Natural killer cell (primary cell): ENCODE measurements at regions of chr17 and their contacts with region 1.

Region 1: GRCh38 chr17:35764123-35764991 is 3.7 kb downstream of the C17orf50 start:
- DNase-seq: peak; percentile 87 to 92
- ATAC-seq: peak; percentile 86 to 92 (median 88)
- H3K4me3 ChIP-seq: peak overlapping the region; percentile 83
- H3K4me3 Mint-ChIP-seq: peak overlapping the region; percentile 95
- H3K27ac ChIP-seq: peak overlapping the region; percentile 65
- H3K27ac Mint-ChIP-seq: peak overlapping the region; percentile 66 to 88
- H3K4me1 ChIP-seq: peaks cover 15% of the 10 kb centered on the region
- H3K4me1 Mint-ChIP-seq: peaks cover 6 to 9% of the 10 kb centered on the region in 2 donors
- H3K27me3 ChIP-seq: no peaks in the 10 kb centered on the region
- H3K27me3 Mint-ChIP-seq: peaks cover 5 to 7% of the 10 kb centered on the region in 2 donors
- CTCF ChIP-seq: peak; percentile 85

Region 2: DNA sequence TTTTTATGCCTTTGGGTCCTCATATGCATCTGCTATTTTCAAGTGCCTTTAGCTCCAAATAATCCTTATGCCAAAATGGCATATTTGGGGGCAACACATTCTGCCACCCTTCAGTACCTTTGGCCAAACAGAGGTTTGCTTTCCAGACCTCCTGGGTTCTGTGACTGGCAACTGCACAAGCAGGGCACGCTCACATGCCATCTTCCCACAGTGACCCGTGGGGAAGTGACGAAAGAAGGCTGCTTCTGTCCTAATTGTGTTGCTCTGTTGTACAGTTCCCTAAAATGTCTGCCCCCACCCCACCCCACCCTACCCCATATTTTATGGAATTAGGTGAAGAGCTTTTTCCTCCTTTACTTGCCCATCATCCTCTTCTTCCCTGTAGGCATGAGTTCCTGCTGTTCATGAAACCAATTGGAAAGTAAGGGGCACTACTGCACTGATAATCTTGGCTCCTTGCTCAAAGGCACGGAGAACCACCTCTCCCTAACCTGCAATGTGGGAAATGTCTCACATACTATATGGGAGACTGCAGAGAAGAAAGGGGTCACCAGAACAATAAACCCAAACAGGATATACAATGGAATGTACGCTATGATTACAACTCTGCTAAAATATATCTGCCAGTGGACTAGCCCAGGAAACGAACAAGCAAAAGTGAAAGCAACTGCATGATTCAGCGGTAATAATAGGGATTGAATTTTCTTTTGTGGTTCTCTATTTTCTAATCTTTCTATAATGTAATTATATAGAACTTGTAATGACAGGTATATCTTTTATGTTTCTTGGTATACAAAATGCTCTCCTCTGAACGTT is 223.6 kb before region 1 on chr17:
- intact Hi-C with region 1: no loop called
- DNase-seq: peak in 1 of 2 donors; percentile 74
- ATAC-seq: peak; percentile 42 to 61 (median 54)
- H3K4me3 ChIP-seq: peak overlapping the region; percentile 39
- H3K4me3 Mint-ChIP-seq: peak overlapping the region; percentile 90
- H3K27ac ChIP-seq: peak overlapping the region; percentile 88
- H3K27ac Mint-ChIP-seq: peak overlapping the region; percentile 84 to 88
- H3K4me1 ChIP-seq: peaks cover 26% of the 10 kb centered on the region
- H3K4me1 Mint-ChIP-seq: peaks cover 46 to 53% of the 10 kb centered on the region in 2 donors
- H3K27me3 ChIP-seq: no peaks in the 10 kb centered on the region
- H3K27me3 Mint-ChIP-seq: no peaks in the 10 kb centered on the region
- CTCF ChIP-seq: no peak

Region 3: DNA sequence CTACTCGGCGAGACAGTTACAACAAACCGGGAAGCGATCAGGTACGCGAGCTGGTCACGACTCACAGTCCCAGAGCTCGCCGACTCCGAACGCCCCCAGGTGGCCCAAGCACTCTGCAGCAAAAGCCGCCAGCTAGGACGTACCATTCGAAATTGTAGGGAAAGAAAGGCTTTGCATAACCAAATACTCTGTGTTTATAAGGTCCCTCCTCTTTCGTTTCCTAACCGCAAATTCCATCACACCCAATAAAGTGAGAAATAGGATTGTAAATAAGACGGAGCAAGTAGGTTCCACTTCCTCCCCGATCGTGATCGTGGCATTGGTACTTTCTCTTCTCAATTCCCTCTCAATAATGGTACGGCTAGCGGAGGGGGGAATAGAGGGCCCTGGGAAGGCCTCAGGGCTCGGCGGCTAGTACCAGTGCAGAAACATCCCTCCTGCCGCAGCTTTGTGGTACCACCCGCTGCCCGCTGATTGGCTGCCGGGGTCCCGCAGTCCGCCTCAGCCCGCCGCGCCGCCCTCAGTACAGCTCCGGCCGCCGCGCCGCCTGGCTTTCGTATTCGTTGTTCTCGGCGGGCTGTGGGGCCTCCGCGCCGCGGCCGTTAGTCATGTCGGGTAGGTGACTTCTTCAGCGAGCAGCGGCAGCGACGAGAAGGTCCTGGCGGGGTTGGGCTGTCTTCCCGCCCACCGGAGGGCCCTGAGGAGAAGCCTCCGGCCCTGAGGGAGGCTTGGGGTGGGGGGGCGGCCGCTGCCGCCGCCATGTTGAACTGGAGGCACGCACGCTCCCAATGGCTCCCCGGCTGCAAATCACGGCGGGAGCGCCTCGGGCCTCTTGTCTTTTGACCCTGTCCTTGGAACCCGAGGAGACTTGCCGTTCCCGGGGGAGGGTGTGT is 44.9 kb after region 1 on chr17 and contains the start of gene TAF15:
- intact Hi-C with region 1: loop called (anchors 1 kb)
- DNase-seq: peak; percentile 97
- ATAC-seq: peak; percentile 90 to 98 (median 92)
- H3K4me3 ChIP-seq: peak within 1 kb of the TSS; percentile 91
- H3K4me3 Mint-ChIP-seq: peak within 1 kb of the TSS; percentile 90
- H3K27ac ChIP-seq: peak within 1 kb of the TSS; percentile 94
- H3K27ac Mint-ChIP-seq: peak within 1 kb of the TSS; percentile 98
- H3K4me1 ChIP-seq: peaks cover 18% of the 10 kb centered on the region
- H3K4me1 Mint-ChIP-seq: peaks cover 52 to 55% of the 10 kb centered on the region in 2 donors
- H3K27me3 ChIP-seq: no peaks in the 10 kb centered on the region
- H3K27me3 Mint-ChIP-seq: no peaks in the 10 kb centered on the region
- CTCF ChIP-seq: peak; percentile 81
- total RNA-seq, gene TAF15: 214 to 253 (median 214) TPM